Activated CD4-positive, alpha-beta T cell treated with anti-CD3 and anti-CD28 coated beads for 36 hours (primary cell): ENCODE measurements at regions of chr7 and their contacts with region 1.

Region 1: DNA sequence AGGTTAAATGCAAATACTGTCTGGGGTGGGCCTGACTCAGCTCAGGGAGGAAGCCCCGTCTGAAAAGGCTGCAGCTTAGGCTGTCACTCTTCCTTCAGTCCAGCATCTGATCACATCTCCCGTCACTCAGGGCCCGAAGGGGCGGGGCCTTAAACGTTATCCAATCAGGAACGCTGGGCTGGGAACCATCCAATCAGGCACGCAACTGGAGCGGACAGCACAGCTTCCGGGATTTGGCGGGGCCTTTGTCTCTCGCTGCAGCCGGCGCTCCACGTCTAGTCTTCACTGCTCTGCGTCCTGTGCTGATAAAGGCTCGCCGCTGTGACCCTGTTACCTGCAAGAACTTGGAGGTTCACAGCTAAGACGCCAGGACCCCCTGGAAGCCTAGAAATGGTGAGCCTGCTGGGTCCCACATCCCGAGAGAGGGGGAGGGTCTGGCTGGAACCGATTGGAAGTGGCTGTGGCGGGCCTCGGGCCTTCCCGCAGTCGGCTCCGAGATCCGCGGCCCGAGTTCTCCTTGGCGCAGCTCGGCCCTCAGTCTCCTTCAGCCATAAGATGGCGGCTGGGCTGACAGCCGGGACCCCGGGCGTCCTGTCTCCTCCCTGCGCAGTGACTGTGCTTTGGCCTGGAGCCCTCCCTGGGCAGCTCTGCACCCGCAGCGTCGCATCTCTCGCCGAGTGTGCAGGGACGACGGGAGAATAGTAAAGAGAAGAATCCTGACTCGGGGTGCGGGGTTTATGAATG is at the start of gene ZNF92:
- DNase-seq: peak; percentile 97
- ATAC-seq: peak; percentile 99
- H3K4me3 Mint-ChIP-seq: peak within 1 kb of the TSS; percentile 96
- H3K27ac Mint-ChIP-seq: peak within 1 kb of the TSS; percentile 90
- H3K4me1 Mint-ChIP-seq: peaks cover 42% of the 10 kb centered on the region
- H3K27me3 Mint-ChIP-seq: no peaks in the 10 kb centered on the region
- total RNA-seq, gene ZNF92: 15.1 to 17.4 TPM

Region 2: GRCh38 chr7:63925623-63926460 is 1447.9 kb before region 1 on chr7:
- CTCF ChIA-PET with region 1: no interaction called
- POLR2A ChIA-PET with region 1: no interaction called
- intact Hi-C with region 1: loop called in 1 of 2 experiments (anchors 5 kb)
- DNase-seq: peak; percentile 95
- ATAC-seq: peak; percentile 97
- H3K4me3 Mint-ChIP-seq: peak overlapping the region; percentile 87
- H3K27ac Mint-ChIP-seq: peak overlapping the region; percentile 93
- H3K4me1 Mint-ChIP-seq: peaks cover 16% of the 10 kb centered on the region
- H3K27me3 Mint-ChIP-seq: no peaks in the 10 kb centered on the region

Region 3: GRCh38 chr7:64665980-64666662 is 707.7 kb before region 1 on chr7 and contains the start of gene ZNF107:
- CTCF ChIA-PET with region 1: no interaction called
- POLR2A ChIA-PET with region 1: no interaction called
- intact Hi-C with region 1: loop called in 1 of 2 experiments (anchors 1 kb)
- DNase-seq: peak; percentile 92
- ATAC-seq: peak; percentile 100
- H3K4me3 Mint-ChIP-seq: peak within 1 kb of the TSS; percentile 95
- H3K27ac Mint-ChIP-seq: peak within 1 kb of the TSS; percentile 97
- H3K4me1 Mint-ChIP-seq: peaks cover 48% of the 10 kb centered on the region
- H3K27me3 Mint-ChIP-seq: no peaks in the 10 kb centered on the region
- total RNA-seq, gene ZNF107: 16.5 to 19.7 TPM

Region 4: DNA sequence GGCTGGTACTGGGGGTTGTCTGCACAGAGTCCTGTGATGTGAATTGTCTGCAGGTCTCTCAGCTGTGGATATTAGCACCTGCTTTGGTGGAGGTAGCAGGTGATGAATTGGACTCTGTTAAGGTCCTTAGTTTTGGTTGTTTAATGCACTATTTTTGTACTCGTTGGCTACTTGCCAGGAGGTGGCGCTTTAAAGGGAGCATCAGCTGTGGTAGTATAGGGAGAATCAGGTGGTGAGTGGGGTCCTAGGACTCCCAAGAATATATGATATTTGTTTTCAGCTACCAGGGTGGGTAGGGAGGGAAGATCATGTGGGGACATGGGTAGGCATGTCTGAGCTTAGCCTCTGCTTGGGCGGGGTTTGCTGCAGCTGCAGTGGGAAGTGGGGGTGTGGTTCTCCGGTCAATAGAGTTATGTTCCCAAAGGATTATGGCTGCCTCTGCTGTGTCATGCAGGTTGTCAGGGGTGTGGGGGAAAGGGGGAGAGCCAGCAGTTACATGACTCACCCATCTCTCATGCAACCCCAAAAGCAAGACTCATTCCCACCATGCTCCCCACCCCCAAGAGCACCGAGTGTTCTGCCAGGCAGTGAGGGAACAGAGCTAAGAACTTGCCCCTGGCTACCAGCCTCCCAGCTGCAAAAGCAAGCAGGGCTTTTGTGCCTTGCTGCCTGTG is 524.4 kb before region 1 on chr7:
- CTCF ChIA-PET with region 1: no interaction called
- POLR2A ChIA-PET with region 1: no interaction called
- intact Hi-C with region 1: no loop called
- DNase-seq: no peak
- ATAC-seq: no peak
- H3K4me3 Mint-ChIP-seq: no peak overlapping the region
- H3K27ac Mint-ChIP-seq: no peak overlapping the region
- H3K4me1 Mint-ChIP-seq: no peaks in the 10 kb centered on the region
- H3K27me3 Mint-ChIP-seq: no peaks in the 10 kb centered on the region

Region 5: GRCh38 chr7:65006094-65006992 is 367.4 kb before region 1 on chr7 and contains the start of gene ERV3-1:
- CTCF ChIA-PET with region 1: interaction called, 3 read pairs
- POLR2A ChIA-PET with region 1: no interaction called
- intact Hi-C with region 1: loop called in 1 of 2 experiments (anchors 10 kb)
- DNase-seq: peak; percentile 95
- ATAC-seq: peak; percentile 100
- H3K4me3 Mint-ChIP-seq: peak within 1 kb of the TSS; percentile 94
- H3K27ac Mint-ChIP-seq: peak within 1 kb of the TSS; percentile 92
- H3K4me1 Mint-ChIP-seq: peaks cover 27% of the 10 kb centered on the region
- H3K27me3 Mint-ChIP-seq: no peaks in the 10 kb centered on the region
- total RNA-seq, gene ERV3-1: 6.3 to 8.9 TPM

Region 6: DNA sequence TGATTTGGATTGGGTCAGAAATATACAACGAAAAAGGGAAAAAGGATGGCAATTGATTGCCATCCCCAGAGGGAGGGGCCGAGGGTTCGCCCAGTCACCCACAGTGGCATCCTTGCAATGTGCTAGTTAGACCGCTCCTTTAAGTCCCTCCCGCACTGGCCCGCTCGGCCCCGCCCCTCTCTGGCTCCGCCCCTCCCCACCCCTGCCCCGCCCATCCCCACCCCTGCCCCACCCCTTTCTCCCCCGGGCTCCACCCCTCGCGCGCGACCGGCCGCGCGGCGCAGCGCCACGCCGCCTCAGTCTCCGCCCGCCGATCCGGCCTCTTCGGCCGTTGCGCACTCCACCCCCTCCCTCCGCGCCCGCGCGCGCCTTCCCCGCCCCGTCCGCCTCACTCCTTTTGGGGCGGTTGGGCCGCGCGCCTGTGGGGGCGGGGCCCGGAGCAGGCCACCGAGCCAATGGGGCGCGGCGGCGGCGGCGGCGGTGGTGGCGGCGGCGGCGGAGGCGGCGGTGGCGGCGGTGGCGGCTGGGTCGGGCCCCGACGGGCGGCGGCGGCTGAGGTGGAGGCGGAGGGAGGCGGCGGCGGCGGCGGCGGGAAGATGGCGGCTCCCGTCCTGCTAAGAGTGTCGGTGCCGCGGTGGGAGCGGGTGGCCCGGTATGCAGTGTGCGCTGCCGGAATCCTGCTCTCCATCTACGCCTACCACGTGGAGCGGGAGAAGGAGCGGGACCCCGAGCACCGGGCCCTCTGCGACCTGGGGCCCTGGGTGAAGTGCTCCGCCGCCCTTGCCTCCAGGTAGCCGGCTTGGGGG is 499.2 kb after region 1 on chr7 and contains the start of gene VKORC1L1:
- CTCF ChIA-PET with region 1: no interaction called
- POLR2A ChIA-PET with region 1: no interaction called
- intact Hi-C with region 1: loop called in 1 of 2 experiments (anchors 5 kb)
- DNase-seq: peak; percentile 98
- ATAC-seq: peak; percentile 96
- H3K4me3 Mint-ChIP-seq: peak within 1 kb of the TSS; percentile 84
- H3K27ac Mint-ChIP-seq: peak within 1 kb of the TSS; percentile 75
- H3K4me1 Mint-ChIP-seq: peaks cover 7% of the 10 kb centered on the region
- H3K27me3 Mint-ChIP-seq: no peaks in the 10 kb centered on the region
- total RNA-seq, gene VKORC1L1: 16.5 to 17.6 TPM

Region 7: DNA sequence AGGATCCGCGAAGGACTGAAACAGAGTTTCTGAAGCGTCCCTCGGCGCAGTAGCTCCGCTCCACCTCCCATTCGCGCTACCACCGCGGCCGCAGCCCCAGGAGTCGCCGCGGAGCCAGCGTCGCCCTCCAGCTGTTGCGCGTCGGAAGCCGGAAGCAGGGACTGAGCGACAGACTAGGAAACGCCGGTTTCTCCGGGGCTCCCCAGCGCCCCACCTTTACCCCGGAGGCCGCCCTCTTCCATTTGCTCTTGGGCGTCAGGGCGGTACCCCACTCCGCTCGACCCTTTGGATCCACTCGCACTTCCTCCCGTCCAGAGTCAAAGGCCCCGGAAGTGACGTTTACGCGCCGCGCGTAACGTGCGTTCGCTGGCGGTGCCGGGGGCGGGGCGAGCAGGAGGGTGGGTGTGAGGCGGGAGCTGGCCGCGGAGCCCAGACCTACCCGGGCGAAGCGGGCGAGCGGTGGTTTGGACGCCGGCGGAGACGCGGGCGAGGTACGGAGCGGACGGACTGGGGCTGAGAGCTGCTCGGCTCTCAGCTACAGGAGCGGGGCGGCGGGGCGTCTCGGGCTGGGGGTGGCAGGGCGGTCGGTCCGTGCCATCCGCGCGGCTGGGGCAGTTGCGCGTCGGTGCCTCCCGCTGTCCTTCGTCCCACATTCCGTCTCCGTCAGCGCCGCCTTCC is 1366.7 kb after region 1 on chr7 and contains the start of gene RABGEF1:
- CTCF ChIA-PET with region 1: no interaction called
- POLR2A ChIA-PET with region 1: no interaction called
- intact Hi-C with region 1: loop called in 1 of 2 experiments (anchors 5 kb)
- DNase-seq: peak; percentile 98
- ATAC-seq: peak; percentile 89
- H3K4me3 Mint-ChIP-seq: peak within 1 kb of the TSS; percentile 98
- H3K27ac Mint-ChIP-seq: peak within 1 kb of the TSS; percentile 91
- H3K4me1 Mint-ChIP-seq: peaks cover 34% of the 10 kb centered on the region
- H3K27me3 Mint-ChIP-seq: no peaks in the 10 kb centered on the region
- total RNA-seq, gene RABGEF1: 19.3 to 22.5 TPM